ENCODE measurements at regions of chr1 and their contacts with region 1.

Region 1: DNA sequence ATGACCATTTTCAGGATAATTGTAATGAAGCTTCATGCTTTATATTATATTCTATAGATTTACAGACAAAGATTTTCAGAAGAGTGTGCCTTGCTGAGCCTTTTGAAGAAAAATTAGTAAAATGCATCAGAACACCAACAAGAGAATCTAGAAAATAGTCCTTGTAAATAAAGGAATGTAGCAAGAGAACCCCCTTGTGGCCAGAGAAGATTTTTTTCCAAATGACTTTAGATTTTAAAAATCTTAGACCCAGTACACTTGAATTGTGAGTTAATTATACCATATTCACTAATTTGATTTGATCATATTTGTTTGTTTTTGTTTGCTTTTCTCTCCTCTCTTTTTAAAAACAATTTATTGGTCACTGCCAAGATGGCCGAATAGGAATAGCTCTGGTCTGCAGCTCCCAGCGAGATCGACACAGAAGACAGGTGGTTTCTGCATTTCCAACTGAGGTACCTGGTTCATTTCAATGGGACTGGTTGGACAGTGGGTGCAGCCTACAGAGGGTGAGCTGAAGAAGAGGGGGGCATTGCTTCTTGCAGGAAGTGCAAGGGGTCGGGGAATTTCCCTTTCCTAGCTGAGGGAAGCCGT is 12.8 kb upstream of the IFI44L start:
- DNase-seq: peak; percentile 69
- ATAC-seq: peak; percentile 64
- H3K4me3 ChIP-seq: no peak overlapping the region
- H3K27ac ChIP-seq: peak overlapping the region; percentile 57
- H3K4me1 ChIP-seq: peaks cover 22% of the 10 kb centered on the region
- H3K27me3 ChIP-seq: no peaks in the 10 kb centered on the region
- CTCF ChIP-seq: peak; percentile 78

Region 2: DNA sequence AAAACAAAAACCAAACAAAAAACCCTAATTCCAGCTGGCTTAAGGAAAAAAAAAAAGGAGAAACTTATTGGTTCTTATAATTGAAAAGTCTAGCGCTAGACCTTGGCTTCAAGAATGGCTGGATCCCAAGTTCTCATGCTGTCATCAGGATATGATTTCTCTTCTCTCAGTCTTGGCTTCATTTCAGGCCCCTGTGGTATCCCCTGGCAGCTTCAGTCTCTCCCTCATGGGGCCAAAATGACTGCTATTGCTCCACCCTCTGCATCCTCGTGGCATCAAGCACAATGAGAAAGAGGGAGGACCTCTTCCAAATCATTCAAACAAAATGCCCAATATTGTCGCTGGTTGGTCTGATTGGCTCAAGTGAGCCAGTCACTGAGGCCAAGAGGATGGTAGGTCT is 480.9 kb before region 1 on chr1:
- CTCF ChIA-PET with region 1: interaction called, 3 read pairs
- POLR2A ChIA-PET with region 1: no interaction called
- intact Hi-C with region 1: loop called (anchors 1 kb)
- DNase-seq: no peak
- ATAC-seq: no peak
- H3K4me3 ChIP-seq: no peak overlapping the region
- H3K27ac ChIP-seq: no peak overlapping the region
- H3K4me1 ChIP-seq: peaks cover 6% of the 10 kb centered on the region
- H3K27me3 ChIP-seq: no peaks in the 10 kb centered on the region
- CTCF ChIP-seq: no peak

Region 3: GRCh38 chr1:78145105-78145580 is 462.3 kb before region 1 on chr1:
- CTCF ChIA-PET with region 1: interaction called, 3 read pairs
- POLR2A ChIA-PET with region 1: no interaction called
- intact Hi-C with region 1: loop called (anchors 1 kb)
- DNase-seq: peak; percentile 85
- ATAC-seq: peak; percentile 74
- H3K4me3 ChIP-seq: no peak overlapping the region
- H3K27ac ChIP-seq: peak overlapping the region; percentile 61
- H3K4me1 ChIP-seq: peaks cover 35% of the 10 kb centered on the region
- H3K27me3 ChIP-seq: no peaks in the 10 kb centered on the region
- CTCF ChIP-seq: peak; percentile 97

Region 4: DNA sequence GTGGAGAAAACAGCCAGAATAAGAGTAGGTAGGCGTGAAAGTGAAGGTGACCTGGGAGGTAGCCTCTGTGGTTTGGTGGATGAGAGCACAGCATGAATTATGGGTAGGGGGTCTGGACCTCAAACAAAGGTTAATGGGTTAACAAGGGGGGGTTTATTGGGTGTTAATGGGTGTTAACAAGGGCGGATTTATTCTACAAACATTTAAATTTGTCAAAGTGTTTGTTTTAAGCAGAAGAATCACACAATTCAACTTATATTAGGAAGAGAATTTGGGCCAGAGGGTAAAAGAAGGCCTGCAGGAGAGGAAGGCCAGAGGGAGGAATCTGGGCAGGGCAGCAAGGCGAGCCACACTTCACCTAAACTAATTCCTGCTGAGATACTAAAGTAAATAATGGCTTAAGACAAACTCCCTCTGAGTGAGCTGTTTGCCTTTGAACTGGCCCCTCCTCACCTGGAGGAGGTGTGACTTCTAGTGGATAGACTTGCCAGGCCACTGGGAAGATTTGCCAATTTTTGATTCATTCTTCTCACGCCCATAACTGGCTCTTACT is 370.0 kb before region 1 on chr1:
- CTCF ChIA-PET with region 1: no interaction called
- POLR2A ChIA-PET with region 1: no interaction called
- intact Hi-C with region 1: loop called (anchors 5 kb)
- DNase-seq: peak; percentile 98
- ATAC-seq: peak; percentile 97
- H3K4me3 ChIP-seq: no peak overlapping the region
- H3K27ac ChIP-seq: peak overlapping the region; percentile 89
- H3K4me1 ChIP-seq: peaks cover 38% of the 10 kb centered on the region
- H3K27me3 ChIP-seq: no peaks in the 10 kb centered on the region
- CTCF ChIP-seq: no peak

Region 5: GRCh38 chr1:78348496-78349284 is 258.7 kb before region 1 on chr1:
- CTCF ChIA-PET with region 1: no interaction called
- POLR2A ChIA-PET with region 1: no interaction called
- intact Hi-C with region 1: loop called (anchors 1 kb)
- DNase-seq: no peak
- ATAC-seq: no peak
- H3K4me3 ChIP-seq: no peak overlapping the region
- H3K27ac ChIP-seq: no peak overlapping the region
- H3K4me1 ChIP-seq: peaks cover 10% of the 10 kb centered on the region; the same call in 1 of the 2 replicates
- H3K27me3 ChIP-seq: no peaks in the 10 kb centered on the region
- CTCF ChIP-seq: no peak

Region 6: DNA sequence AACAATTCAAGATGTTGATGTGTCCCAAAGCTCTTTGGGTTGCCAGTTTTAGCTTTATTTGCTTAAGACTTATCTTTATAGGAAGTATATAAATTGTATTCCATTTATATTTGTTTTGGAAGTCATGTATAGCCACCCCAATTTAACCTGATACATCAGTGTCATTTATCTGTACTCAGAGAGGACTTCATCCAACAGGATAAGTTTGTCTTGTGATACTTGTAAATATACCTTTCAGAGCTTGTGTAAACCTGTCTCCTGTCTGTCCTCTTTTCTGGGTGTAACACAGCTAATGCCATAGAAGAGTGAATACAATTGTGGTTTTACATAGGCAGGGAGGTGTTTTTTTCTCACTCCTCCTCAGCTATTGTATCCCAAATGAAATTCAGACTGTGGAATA is 106.2 kb before region 1 on chr1:
- CTCF ChIA-PET with region 1: no interaction called
- POLR2A ChIA-PET with region 1: no interaction called
- intact Hi-C with region 1: loop called (anchors 5 kb)
- DNase-seq: peak; percentile 22
- ATAC-seq: peak; percentile 87
- H3K4me3 ChIP-seq: no peak overlapping the region
- H3K27ac ChIP-seq: peak overlapping the region; percentile 21; the same call in 1 of the 2 replicates
- H3K4me1 ChIP-seq: peaks cover 18% of the 10 kb centered on the region; the same call in 1 of the 2 replicates
- H3K27me3 ChIP-seq: no peaks in the 10 kb centered on the region
- CTCF ChIP-seq: no peak

Region 7: DNA sequence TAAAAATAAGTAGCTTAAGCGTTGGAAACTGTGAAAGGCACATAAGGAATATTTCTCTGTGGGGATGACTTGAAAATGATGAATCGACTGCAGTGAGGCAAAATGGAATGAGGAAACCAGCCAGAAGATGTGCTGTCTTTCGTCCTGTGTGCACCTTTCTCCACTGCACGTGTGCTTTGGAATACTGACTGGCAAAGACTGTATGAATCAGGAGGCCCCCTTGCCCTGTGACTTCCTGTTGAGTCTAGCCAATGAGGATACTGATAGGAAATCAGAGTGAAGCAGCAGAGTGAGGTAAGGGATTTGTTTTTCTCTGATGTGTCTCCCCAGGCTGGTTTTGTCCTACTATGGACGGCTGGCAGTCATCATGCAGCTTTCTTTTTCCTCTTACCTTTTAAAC is 517.3 kb after region 1 on chr1:
- CTCF ChIA-PET with region 1: no interaction called
- POLR2A ChIA-PET with region 1: no interaction called
- intact Hi-C with region 1: no loop called
- DNase-seq: peak; percentile 7
- ATAC-seq: no peak
- H3K4me3 ChIP-seq: no peak overlapping the region
- H3K27ac ChIP-seq: no peak overlapping the region
- H3K4me1 ChIP-seq: peaks cover 16% of the 10 kb centered on the region
- H3K27me3 ChIP-seq: no peaks in the 10 kb centered on the region
- CTCF ChIP-seq: no peak

Region 8: GRCh38 chr1:79293611-79294010 is 686.2 kb after region 1 on chr1:
- CTCF ChIA-PET with region 1: no interaction called
- POLR2A ChIA-PET with region 1: no interaction called
- intact Hi-C with region 1: no loop called
- DNase-seq: peak; percentile 61
- ATAC-seq: peak; percentile 99
- H3K4me3 ChIP-seq: no peak overlapping the region
- H3K27ac ChIP-seq: peak overlapping the region; percentile 4; the same call in 1 of the 2 replicates
- H3K4me1 ChIP-seq: peaks cover 4% of the 10 kb centered on the region; the same call in 1 of the 2 replicates
- H3K27me3 ChIP-seq: no peaks in the 10 kb centered on the region
- CTCF ChIP-seq: no peak